Spleen (tissue), 13 donors: ENCODE measurements at regions of chr22 and their contacts with region 1.

Region 1: GRCh38 chr22:22959147-22959827 is 71.7 kb downstream of the IGLL5 start:
- DNase-seq: peak; percentile 86
- H3K4me3 ChIP-seq: no peak overlapping the region
- H3K27ac ChIP-seq: no peak overlapping the region
- H3K4me1 ChIP-seq: peaks cover 0 to 24% (median 14%) of the 10 kb centered on the region in 6 donors
- H3K27me3 ChIP-seq: peaks cover 0 to 14% (median 0%) of the 10 kb centered on the region in 7 donors
- CTCF ChIP-seq: peak; percentile 84 to 100 (median 95)
- POLR2A ChIP-seq: no peak

Region 2: GRCh38 chr22:22848364-22848866 is 110.9 kb before region 1 on chr22:
- intact Hi-C with region 1: loop called (anchors 5 kb)
- DNase-seq: peak; percentile 85
- H3K4me3 ChIP-seq: no peak overlapping the region
- H3K27ac ChIP-seq: no peak overlapping the region
- H3K4me1 ChIP-seq: peaks cover 0 to 28% (median 3%) of the 10 kb centered on the region in 6 donors
- H3K27me3 ChIP-seq: no peaks in the 10 kb centered on the region
- CTCF ChIP-seq: peak; percentile 72 to 89 (median 80)
- POLR2A ChIP-seq: no peak

Region 3: DNA sequence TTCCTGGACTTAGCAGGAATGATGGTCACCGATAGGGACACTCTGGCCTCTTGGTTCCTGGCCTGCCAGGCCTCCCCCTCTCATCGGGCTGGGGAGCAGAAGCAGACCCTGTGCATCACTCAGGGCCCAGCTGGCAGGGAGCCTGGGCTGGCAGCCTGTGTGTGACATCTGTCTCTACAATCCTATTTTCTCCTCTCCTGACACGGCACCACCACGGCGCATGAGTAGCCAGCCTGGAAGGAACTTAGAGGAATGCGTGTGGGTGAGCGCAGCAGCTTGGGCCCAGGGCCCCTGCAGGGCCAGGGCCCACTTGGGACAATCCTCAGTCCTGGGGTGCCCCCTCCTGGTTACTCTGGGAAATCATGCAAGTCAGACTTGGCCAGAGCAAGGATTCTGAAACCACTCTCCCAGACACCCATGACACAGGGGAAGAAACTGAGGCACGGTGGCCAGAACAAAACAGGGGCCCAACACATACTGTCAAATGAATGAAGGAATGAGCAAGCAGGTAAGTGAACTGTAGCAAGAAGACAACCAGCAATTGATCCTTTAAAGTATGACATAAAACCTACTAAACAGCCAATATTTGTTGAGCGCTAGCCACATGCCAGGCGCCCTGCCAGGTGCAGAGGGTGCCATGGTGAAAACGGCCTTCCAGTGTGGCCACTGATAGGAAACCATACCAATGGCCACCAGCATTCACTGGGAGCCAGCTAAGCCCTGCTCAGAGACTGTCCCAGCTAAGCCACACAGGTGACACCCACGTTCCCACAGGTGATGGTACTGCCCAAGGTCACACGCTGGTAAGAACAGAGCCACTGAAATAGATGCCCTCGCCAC is 169.2 kb after region 1 on chr22:
- intact Hi-C with region 1: loop called (anchors 2 kb)
- DNase-seq: peak; percentile 90
- H3K4me3 ChIP-seq: no peak overlapping the region
- H3K27ac ChIP-seq: no peak overlapping the region
- H3K4me1 ChIP-seq: peaks cover 0 to 9% (median 5%) of the 10 kb centered on the region in 6 donors
- H3K27me3 ChIP-seq: no peaks in the 10 kb centered on the region
- CTCF ChIP-seq: peak; percentile 71 to 91 (median 84)
- POLR2A ChIP-seq: no peak

Region 4: GRCh38 chr22:23152315-23153113 is 193.2 kb after region 1 on chr22:
- intact Hi-C with region 1: no loop called
- DNase-seq: peak; percentile 86
- H3K4me3 ChIP-seq: peak overlapping the region in 4 of 8 donors; percentile 15 to 56 (median 26)
- H3K27ac ChIP-seq: peak overlapping the region in 7 of 8 donors; percentile 79 to 98 (median 86)
- H3K4me1 ChIP-seq: peaks cover 0 to 67% (median 27%) of the 10 kb centered on the region in 6 donors
- H3K27me3 ChIP-seq: no peaks in the 10 kb centered on the region
- CTCF ChIP-seq: no peak
- POLR2A ChIP-seq: no peak

Region 5: GRCh38 chr22:23289851-23290724 is 330.8 kb after region 1 on chr22:
- intact Hi-C with region 1: loop called (anchors 5 kb)
- DNase-seq: no peak
- H3K4me3 ChIP-seq: no peak overlapping the region
- H3K27ac ChIP-seq: no peak overlapping the region
- H3K4me1 ChIP-seq: peaks cover 0 to 8% (median 0%) of the 10 kb centered on the region in 6 donors
- H3K27me3 ChIP-seq: no peaks in the 10 kb centered on the region
- CTCF ChIP-seq: peak; percentile 38 to 84 (median 65)
- POLR2A ChIP-seq: no peak